CD4-positive, alpha-beta memory T cell (primary cell): ENCODE measurements at regions of chr19 and their contacts with region 1.

Region 1: GRCh38 chr19:57362997-57363705 is at the starts of genes TRAPPC2B and ZNF547:
- DNase-seq: peak; percentile 97 to 99 (median 99)
- H3K4me3 ChIP-seq: peak within 1 kb of the TSS; percentile 51 to 70
- H3K4me3 Mint-ChIP-seq: peak within 1 kb of the TSS; percentile 92 to 97 (median 94)
- H3K27ac ChIP-seq: peak within 1 kb of the TSS; percentile 76
- H3K27ac Mint-ChIP-seq: peak within 1 kb of the TSS; percentile 97 to 99 (median 99)
- H3K4me1 ChIP-seq: peaks cover 12% of the 10 kb centered on the region
- H3K4me1 Mint-ChIP-seq: peaks cover 12 to 18% (median 16%) of the 10 kb centered on the region in 4 donors
- H3K27me3 ChIP-seq: no peaks in the 10 kb centered on the region
- H3K27me3 Mint-ChIP-seq: peaks cover 0 to 2% of the 10 kb centered on the region in 2 donors
- total RNA-seq, gene TRAPPC2B: 11.0 to 12.1 TPM
- total RNA-seq, gene ZNF547: 6.5 to 10.8 TPM

Region 2: GRCh38 chr19:57279418-57280066 is 83.6 kb before region 1 on chr19:
- CTCF ChIA-PET with region 1: no interaction called
- POLR2A ChIA-PET with region 1: no interaction called
- intact Hi-C with region 1: loop called (anchors 1 kb)
- DNase-seq: peak in 4 of 5 donors; percentile 77 to 85 (median 84)
- H3K4me3 ChIP-seq: peak overlapping the region; percentile 68 to 74
- H3K4me3 Mint-ChIP-seq: peak overlapping the region in 1 of 8 donors; percentile 20
- H3K27ac ChIP-seq: peak overlapping the region; percentile 100
- H3K27ac Mint-ChIP-seq: peak overlapping the region in 1 of 7 donors; percentile 74
- H3K4me1 ChIP-seq: peaks cover 38% of the 10 kb centered on the region
- H3K4me1 Mint-ChIP-seq: peaks cover 0 to 33% (median 23%) of the 10 kb centered on the region in 4 donors
- H3K27me3 ChIP-seq: no peaks in the 10 kb centered on the region
- H3K27me3 Mint-ChIP-seq: no peaks in the 10 kb centered on the region

Region 3: GRCh38 chr19:57320180-57321084 is 42.7 kb before region 1 on chr19 and contains the start of gene ZNF543:
- CTCF ChIA-PET with region 1: no interaction called
- POLR2A ChIA-PET with region 1: no interaction called
- intact Hi-C with region 1: loop called (anchors 1 kb)
- DNase-seq: peak; percentile 86 to 91 (median 89)
- H3K4me3 ChIP-seq: peak within 1 kb of the TSS; percentile 81 to 90
- H3K4me3 Mint-ChIP-seq: peak within 1 kb of the TSS; percentile 90 to 97 (median 94)
- H3K27ac ChIP-seq: peak within 1 kb of the TSS; percentile 84
- H3K27ac Mint-ChIP-seq: peak within 1 kb of the TSS; percentile 90 to 99 (median 97)
- H3K4me1 ChIP-seq: peaks cover 29% of the 10 kb centered on the region
- H3K4me1 Mint-ChIP-seq: peaks cover 18 to 34% (median 27%) of the 10 kb centered on the region in 4 donors
- H3K27me3 ChIP-seq: peaks cover 8% of the 10 kb centered on the region
- H3K27me3 Mint-ChIP-seq: peaks cover 14 to 19% of the 10 kb centered on the region in 2 donors
- total RNA-seq, gene ZNF543: 9.4 to 10.7 TPM

Region 4: DNA sequence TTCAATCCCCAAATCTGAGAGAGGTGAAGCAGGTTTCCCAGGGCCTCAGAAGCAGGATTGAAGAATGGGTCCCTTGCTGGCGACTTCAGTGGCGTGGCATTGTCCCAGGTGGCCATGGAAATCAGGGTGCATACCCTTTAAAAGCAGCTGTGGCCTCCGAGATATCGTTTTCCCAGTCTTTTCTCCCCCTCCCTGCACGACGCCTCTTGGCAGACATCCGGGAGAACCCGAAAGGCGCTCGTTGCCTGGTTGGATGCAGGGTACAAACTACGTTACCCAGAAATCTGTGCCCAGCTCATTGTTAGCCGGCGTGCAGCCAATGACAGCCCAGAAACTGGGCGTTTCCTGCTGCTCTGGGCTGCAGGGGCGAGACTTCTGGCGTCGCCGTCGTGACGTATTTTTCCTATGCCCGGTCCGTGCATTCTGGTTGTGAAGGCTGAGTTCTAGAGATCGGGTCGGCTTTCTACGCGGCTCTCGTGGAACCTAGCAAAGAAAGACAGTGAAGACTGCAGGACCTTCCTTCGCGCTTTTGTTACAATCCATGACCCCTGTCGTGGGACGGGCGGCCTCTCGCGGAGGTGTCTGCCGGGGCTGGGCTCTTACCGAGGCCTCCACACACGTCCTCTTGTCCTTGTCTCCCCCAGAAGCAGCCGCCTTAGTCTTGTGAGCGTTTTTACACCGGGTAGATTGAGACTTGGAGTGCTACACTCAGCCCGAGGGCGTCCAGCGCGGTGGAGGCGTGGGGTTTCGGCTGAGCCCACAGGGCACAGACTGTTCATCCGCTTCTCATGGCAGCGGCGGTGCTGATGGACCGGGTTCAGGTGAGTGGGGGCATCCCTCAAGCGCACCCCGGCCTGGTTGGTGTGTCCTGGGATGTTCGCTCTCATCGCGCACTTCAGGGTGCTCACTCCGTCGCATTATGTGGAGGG is 12.0 kb before region 1 on chr19 and contains the start of gene ZNF304:
- CTCF ChIA-PET with region 1: no interaction called
- POLR2A ChIA-PET with region 1: interaction called, 12 read pairs
- intact Hi-C with region 1: loop called (anchors 1 kb)
- DNase-seq: peak; percentile 78 to 85 (median 84)
- H3K4me3 ChIP-seq: peak within 1 kb of the TSS; percentile 43 to 93
- H3K4me3 Mint-ChIP-seq: peak within 1 kb of the TSS; percentile 94 to 99 (median 96)
- H3K27ac ChIP-seq: peak within 1 kb of the TSS; percentile 73
- H3K27ac Mint-ChIP-seq: peak within 1 kb of the TSS; percentile 83 to 97 (median 96)
- H3K4me1 ChIP-seq: peaks cover 20% of the 10 kb centered on the region
- H3K4me1 Mint-ChIP-seq: peaks cover 28 to 39% (median 31%) of the 10 kb centered on the region in 4 donors
- H3K27me3 ChIP-seq: no peaks in the 10 kb centered on the region
- H3K27me3 Mint-ChIP-seq: peaks cover 2% of the 10 kb centered on the region in 2 donors
- total RNA-seq, gene ZNF304: 13.3 to 13.6 TPM

Region 5: DNA sequence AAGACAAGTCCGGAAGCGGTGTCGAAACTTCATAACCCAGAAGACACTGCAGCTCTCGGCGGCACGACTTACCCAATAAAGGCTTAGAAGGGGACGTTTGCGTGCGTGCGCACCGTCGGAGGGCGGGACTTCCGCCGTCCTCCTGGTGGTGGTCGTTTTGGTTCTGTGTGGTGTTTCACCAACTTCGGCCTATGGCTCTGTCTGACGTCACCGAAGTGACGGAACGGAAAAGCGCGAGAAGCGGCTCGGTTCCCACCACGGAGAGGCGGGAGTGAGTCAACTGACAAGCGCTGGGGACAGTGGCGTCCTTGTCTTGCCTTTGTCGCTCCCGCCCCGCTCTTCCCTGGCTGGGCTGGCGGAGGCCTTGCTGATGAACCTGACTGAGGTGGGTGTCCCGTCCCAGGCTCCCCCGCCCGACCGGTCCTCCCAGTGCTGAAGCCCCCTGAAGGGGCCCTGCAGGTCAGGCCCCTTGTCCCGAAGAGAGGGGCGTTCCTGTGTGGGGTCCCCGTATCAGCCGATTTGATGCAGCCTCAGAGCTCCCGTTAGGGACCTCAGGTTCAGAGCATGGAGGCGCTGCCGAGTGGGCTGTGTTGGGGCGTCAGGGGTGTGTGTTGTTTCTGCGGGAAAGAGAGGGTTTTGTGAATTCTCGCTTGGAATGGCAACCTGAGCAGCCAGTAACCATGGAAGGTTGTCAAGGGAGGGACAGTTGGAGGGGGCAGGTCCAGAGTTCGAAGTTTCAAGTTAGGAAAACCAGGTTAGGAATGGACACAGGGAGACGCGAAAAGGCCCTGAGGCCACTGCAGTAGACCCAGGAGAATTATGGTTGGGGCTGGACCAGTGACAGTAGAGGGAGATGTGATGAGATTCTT is 26.8 kb after region 1 on chr19 and contains the start of gene ZNF548:
- CTCF ChIA-PET with region 1: interaction called, 3 read pairs
- POLR2A ChIA-PET with region 1: interaction called, 15 read pairs
- intact Hi-C with region 1: loop called (anchors 1 kb)
- DNase-seq: peak; percentile 93 to 100 (median 95)
- H3K4me3 ChIP-seq: peak within 1 kb of the TSS; percentile 52 to 62
- H3K4me3 Mint-ChIP-seq: peak within 1 kb of the TSS; percentile 97 to 99 (median 98)
- H3K27ac ChIP-seq: peak within 1 kb of the TSS; percentile 95
- H3K27ac Mint-ChIP-seq: peak within 1 kb of the TSS; percentile 98 to 100 (median 99)
- H3K4me1 ChIP-seq: peaks cover 22% of the 10 kb centered on the region
- H3K4me1 Mint-ChIP-seq: peaks cover 22 to 41% (median 31%) of the 10 kb centered on the region in 4 donors
- H3K27me3 ChIP-seq: no peaks in the 10 kb centered on the region
- H3K27me3 Mint-ChIP-seq: peaks cover 0 to 3% of the 10 kb centered on the region in 2 donors
- total RNA-seq, gene ZNF548: 85.4 to 103 TPM